ENCODE measurements at regions of chr1 and their contacts with region 1.

Region 1: GRCh38 chr1:187013582-187014200 is 184.9 kb downstream of the PLA2G4A start:
- DNase-seq: no peak
- ATAC-seq: no peak
- H3K4me3 ChIP-seq: no peak overlapping the region
- H3K4me3 Mint-ChIP-seq: no peak overlapping the region
- H3K27ac ChIP-seq: no peak overlapping the region
- H3K27ac Mint-ChIP-seq: no peak overlapping the region
- H3K4me1 ChIP-seq: no peaks in the 10 kb centered on the region
- H3K4me1 Mint-ChIP-seq: no peaks in the 10 kb centered on the region
- H3K27me3 ChIP-seq: no peaks in the 10 kb centered on the region
- H3K27me3 Mint-ChIP-seq: no peaks in the 10 kb centered on the region
- CTCF ChIP-seq: no peak

Region 2: GRCh38 chr1:187036350-187036749 is 22.7 kb after region 1 on chr1:
- CTCF ChIA-PET with region 1: no interaction called
- POLR2A ChIA-PET with region 1: no interaction called
- intact Hi-C with region 1: loop called (anchors 1 kb)
- DNase-seq: no peak
- ATAC-seq: no peak
- H3K4me3 ChIP-seq: no peak overlapping the region
- H3K4me3 Mint-ChIP-seq: no peak overlapping the region
- H3K27ac ChIP-seq: no peak overlapping the region
- H3K27ac Mint-ChIP-seq: no peak overlapping the region
- H3K4me1 ChIP-seq: no peaks in the 10 kb centered on the region
- H3K4me1 Mint-ChIP-seq: no peaks in the 10 kb centered on the region
- H3K27me3 ChIP-seq: no peaks in the 10 kb centered on the region
- H3K27me3 Mint-ChIP-seq: no peaks in the 10 kb centered on the region
- CTCF ChIP-seq: no peak

Region 3: DNA sequence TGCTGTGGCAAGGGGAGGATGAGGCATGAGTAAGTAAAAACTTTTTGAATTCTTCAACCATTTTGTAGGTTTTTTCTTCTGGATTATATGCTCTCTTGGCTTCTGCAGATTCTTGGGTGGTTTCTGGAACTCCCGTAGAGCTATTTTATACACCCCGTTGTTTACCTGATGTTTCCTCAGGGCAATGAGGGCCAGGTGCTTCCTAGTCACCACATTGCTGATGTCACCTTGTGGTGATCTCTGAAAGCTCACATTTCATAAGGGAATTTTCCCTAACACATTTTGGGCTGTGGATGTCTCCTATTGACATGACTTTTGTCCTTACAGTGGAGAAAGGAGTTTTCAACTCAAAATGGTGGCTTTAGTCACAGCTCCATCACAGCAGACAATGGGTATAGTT is 171.7 kb after region 1 on chr1:
- CTCF ChIA-PET with region 1: no interaction called
- POLR2A ChIA-PET with region 1: no interaction called
- intact Hi-C with region 1: no loop called
- DNase-seq: no peak
- ATAC-seq: no peak
- H3K4me3 ChIP-seq: no peak overlapping the region
- H3K4me3 Mint-ChIP-seq: no peak overlapping the region
- H3K27ac ChIP-seq: no peak overlapping the region
- H3K27ac Mint-ChIP-seq: no peak overlapping the region
- H3K4me1 ChIP-seq: no peaks in the 10 kb centered on the region
- H3K4me1 Mint-ChIP-seq: no peaks in the 10 kb centered on the region
- H3K27me3 ChIP-seq: no peaks in the 10 kb centered on the region
- H3K27me3 Mint-ChIP-seq: no peaks in the 10 kb centered on the region
- CTCF ChIP-seq: no peak

Region 4: DNA sequence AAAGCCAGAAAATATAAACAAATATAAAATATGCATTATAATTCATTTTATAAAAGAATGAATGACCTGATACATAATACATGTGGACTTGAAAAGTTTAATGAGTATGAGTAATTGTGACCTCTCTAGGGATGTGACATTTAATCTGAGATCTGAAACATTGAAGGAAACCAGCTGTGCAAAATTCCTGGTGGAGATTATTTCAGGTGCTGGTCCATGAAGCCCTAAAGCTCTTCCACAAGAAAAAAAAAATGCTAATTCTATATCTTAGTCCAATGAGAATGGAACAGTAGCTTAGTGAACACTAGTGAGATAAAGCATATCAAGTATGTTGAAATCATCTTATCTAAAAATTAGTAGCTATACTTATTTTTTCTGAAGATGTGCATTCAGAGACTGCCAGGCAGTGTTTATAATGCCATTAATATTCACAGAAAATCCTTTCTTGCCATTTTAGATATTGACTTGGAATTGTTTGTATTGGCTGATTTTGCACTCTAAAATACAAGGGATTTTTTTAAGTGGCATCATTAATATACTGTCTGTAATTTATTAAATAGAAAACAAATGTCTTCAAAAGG is 1301.0 kb after region 1 on chr1:
- CTCF ChIA-PET with region 1: no interaction called
- POLR2A ChIA-PET with region 1: no interaction called
- intact Hi-C with region 1: no loop called
- DNase-seq: no peak
- ATAC-seq: no peak
- H3K4me3 ChIP-seq: no peak overlapping the region
- H3K4me3 Mint-ChIP-seq: no peak overlapping the region
- H3K27ac ChIP-seq: no peak overlapping the region
- H3K27ac Mint-ChIP-seq: no peak overlapping the region
- H3K4me1 ChIP-seq: no peaks in the 10 kb centered on the region
- H3K4me1 Mint-ChIP-seq: no peaks in the 10 kb centered on the region
- H3K27me3 ChIP-seq: no peaks in the 10 kb centered on the region
- H3K27me3 Mint-ChIP-seq: no peaks in the 10 kb centered on the region
- CTCF ChIP-seq: no peak